Activated naive CD4-positive, alpha-beta T cell treated with anti-CD3 and anti-CD28 coated beads for 36 hours (primary cell): ENCODE measurements at regions of chr19 and their contacts with region 1.

Region 1: GRCh38 chr19:925526-926322 is at the start of gene ARID3A:
- DNase-seq: peak; percentile 76
- H3K4me3 Mint-ChIP-seq: peak within 1 kb of the TSS; percentile 73
- H3K27ac Mint-ChIP-seq: peak within 1 kb of the TSS; percentile 56
- H3K4me1 Mint-ChIP-seq: peaks cover 13% of the 10 kb centered on the region
- H3K27me3 Mint-ChIP-seq: no peaks in the 10 kb centered on the region
- total RNA-seq, gene ARID3A: 23.1 to 28.4 TPM

Region 2: DNA sequence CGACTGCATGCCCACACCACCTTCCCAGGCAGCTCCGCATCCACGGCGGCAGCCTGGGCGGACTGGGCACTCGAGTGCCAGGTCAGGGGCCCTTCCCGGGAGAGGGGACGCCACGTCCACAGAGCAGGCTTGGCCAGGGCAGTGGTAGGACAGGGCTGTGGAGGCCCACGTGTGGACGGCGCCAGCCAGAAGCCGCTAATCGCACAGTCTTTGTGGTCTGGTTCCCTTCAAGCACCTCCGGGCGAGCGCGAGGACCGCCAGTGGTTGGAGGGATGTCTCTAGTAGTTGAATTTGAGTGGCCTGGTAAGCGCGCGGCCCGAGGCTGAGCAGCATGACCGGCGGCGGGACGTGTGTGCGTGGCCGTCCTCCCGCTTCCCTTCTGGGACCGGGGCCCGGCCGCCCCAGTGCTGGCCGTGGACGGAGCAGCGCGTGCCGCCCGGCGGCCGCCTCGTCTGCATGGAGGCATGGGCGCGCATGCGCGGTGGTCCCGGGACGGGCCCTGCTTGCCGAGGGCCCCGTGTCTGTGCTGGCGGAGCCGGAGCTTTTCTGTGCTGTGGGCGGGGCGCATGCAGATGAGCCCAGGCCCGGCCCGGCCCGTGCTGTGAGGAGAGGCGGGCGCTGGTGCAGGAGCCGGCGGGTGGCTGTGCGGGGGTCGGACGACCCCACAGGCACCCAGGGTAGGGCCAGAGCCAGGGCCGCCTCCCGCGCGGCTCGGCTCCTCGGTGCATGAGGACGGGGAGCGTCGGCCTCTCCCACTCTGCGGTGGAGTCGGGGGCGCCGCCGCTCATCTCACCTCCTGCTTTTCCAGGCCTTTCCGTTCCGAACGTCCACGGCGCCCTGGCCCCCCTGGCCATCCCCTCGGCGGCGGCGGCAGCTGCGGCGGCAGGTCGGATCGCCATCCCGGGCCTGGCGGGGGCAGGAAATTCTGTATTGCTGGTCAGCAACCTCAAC is 119.8 kb before region 1 on chr19:
- CTCF ChIA-PET with region 1: no interaction called
- intact Hi-C with region 1: no loop called
- DNase-seq: no peak
- H3K4me3 Mint-ChIP-seq: no peak overlapping the region
- H3K27ac Mint-ChIP-seq: no peak overlapping the region
- H3K4me1 Mint-ChIP-seq: peaks cover 18% of the 10 kb centered on the region
- H3K27me3 Mint-ChIP-seq: no peaks in the 10 kb centered on the region

Region 3: DNA sequence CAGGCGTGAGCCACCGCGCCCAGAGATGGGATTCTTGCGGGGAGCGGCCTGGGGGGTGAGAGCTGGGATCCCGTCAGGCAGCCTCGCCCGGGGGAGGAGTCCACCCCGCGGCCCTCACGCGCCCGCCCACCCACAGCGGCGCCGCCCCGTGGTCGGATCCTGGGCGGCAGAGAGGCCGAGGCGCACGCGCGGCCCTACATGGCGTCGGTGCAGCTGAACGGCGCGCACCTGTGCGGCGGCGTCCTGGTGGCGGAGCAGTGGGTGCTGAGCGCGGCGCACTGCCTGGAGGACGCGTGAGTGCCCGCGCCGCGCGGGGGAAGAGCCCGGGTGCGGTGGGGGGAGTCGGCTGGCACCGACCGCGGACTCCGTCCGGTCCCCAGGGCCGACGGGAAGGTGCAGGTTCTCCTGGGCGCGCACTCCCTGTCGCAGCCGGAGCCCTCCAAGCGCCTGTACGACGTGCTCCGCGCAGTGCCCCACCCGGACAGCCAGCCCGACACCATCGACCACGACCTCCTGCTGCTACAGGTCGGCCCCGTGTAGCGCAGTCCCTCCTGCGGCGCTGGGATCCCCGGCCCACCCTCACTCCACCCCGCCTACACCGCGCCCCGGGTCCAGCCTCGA is 65.1 kb before region 1 on chr19:
- CTCF ChIA-PET with region 1: interaction called, 23 read pairs
- intact Hi-C with region 1: loop called (anchors 1 kb)
- DNase-seq: peak; percentile 45
- H3K4me3 Mint-ChIP-seq: peak overlapping the region; percentile 27
- H3K27ac Mint-ChIP-seq: no peak overlapping the region
- H3K4me1 Mint-ChIP-seq: peaks cover 13% of the 10 kb centered on the region
- H3K27me3 Mint-ChIP-seq: peaks cover 6% of the 10 kb centered on the region

Region 4: DNA sequence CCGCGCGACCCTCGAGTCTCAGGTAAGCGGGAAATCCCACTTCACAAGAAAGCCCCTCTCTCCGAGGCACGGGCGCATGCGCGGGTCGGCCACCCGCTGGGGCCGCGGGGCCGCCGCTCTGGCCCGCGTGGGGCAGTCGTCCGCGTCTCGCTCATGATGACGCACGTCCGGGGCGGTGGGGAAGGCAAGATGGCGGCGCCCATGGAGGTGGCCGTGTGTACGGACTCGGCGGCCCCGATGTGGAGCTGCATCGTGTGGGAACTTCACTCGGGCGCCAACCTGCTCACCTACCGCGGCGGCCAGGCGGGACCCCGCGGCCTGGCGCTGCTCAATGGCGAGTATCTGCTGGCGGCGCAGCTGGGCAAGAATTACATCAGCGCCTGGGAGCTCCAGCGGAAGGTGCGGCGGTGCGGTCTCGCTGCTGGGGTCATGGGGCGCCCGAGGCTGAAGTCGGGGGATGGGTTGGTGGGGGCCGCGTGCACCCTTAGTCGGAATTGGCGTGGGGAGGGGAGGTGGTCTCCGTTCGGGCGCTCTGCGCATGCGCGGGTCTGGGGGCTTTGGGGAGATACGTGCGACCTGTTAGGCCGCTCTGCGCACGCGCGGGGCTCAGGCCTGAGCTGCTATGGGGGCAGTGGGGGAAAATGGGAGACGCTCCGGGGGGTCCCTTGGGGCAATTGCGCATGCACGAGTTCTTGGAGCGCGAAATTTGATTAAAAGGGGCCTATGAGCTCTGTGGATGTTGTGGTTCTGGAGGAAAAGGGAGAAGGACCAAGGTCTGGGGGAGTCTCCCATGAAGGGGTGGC is 58.6 kb after region 1 on chr19 and contains the start of gene WDR18:
- CTCF ChIA-PET with region 1: interaction called, 102 read pairs
- intact Hi-C with region 1: loop called (anchors 1 kb)
- DNase-seq: peak; percentile 94
- H3K4me3 Mint-ChIP-seq: peak within 1 kb of the TSS; percentile 92
- H3K27ac Mint-ChIP-seq: peak within 1 kb of the TSS; percentile 91
- H3K4me1 Mint-ChIP-seq: peaks cover 21% of the 10 kb centered on the region
- H3K27me3 Mint-ChIP-seq: no peaks in the 10 kb centered on the region
- total RNA-seq, gene WDR18: 77.8 to 82.0 TPM

Region 5: GRCh38 chr19:1094975-1095701 is 169.4 kb after region 1 on chr19 and contains the start of gene POLR2E:
- CTCF ChIA-PET with region 1: interaction called, 3 read pairs
- intact Hi-C with region 1: loop called (anchors 5 kb)
- DNase-seq: peak; percentile 99
- H3K4me3 Mint-ChIP-seq: peak within 1 kb of the TSS; percentile 92
- H3K27ac Mint-ChIP-seq: peak within 1 kb of the TSS; percentile 92
- H3K4me1 Mint-ChIP-seq: peaks cover 65% of the 10 kb centered on the region
- H3K27me3 Mint-ChIP-seq: no peaks in the 10 kb centered on the region
- total RNA-seq, gene POLR2E: 238 to 258 TPM